Posterior vena cava (tissue), 2 donors: ENCODE measurements at regions of chr2 and their contacts with region 1.

Region 1: GRCh38 chr2:45000921-45001868 is 8.1 kb downstream of the SIX2 start:
- DNase-seq: no peak

Region 2: GRCh38 chr2:44981136-44982108 is 19.8 kb before region 1 on chr2:
- intact Hi-C with region 1: loop called in 1 of 2 experiments (anchors 1 kb)
- DNase-seq: peak; percentile 92